Activated B cell treated with CpG ODN at 0.5 μM for 24 hours (primary cell): ENCODE measurements at regions of chr3 and their contacts with region 1.

Region 1: DNA sequence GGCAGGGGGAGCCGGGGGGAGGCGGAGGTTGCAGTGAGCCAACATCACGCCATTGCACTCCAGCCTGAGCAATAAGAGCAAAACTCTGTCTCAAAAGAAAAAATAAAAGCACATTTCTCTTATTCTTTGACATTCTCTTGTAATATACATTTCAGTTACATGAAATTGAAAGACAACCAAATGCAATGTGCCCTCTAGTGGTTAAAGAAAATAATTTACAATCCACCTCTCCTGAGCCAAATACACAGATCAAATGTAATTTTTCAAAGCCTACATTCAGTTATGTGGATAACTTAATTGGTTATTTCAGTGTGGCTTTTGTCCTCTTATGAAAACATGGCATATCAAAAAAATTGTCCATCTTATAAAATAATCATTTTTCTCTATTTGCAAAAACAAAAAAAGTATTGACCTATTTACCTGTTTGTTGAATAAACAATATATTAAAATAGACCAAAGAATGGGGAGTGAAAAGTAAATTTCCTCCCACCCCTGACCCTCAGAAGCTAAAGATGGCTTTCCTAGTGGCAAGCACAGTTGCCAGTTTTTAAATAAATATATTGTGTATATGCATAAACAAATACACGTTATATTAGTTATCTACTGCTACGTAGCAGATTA is 14.2 kb upstream of the U2SURP start:
- DNase-seq: no peak
- ATAC-seq: peak; percentile 25
- H3K4me3 Mint-ChIP-seq: no peak overlapping the region
- H3K27ac Mint-ChIP-seq: no peak overlapping the region
- H3K4me1 Mint-ChIP-seq: no peaks in the 10 kb centered on the region
- H3K27me3 Mint-ChIP-seq: no peaks in the 10 kb centered on the region
- CTCF ChIP-seq: peak; percentile 19

Region 2: DNA sequence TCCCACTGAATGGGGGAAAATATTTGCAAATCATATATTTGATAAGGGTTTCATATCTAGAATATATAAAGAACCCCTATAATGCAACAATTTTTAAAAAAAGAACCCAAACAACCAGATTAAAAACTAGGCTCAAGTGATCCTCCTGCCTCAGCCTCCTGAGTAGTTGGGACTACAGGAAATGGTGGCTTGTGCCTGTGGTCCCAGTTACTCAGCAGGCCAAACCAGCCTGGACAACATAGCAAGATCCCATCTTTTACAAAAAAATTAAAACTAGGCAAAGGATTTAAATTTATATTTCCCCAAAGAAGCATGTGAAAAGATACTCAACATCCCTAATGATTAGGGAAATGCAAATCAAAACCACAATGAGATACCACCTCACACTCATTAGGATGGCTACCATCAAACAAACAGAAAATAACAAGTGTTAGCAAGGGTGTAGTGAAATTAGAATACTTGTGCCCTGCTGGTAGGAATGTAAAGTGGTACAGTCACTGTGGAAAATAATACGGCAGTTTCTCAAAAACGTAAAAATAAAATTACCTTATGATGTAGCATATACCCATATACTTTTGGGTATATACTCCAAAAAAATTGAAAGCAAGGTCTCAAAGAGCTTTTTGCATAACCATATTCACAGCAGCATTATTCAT is 857.5 kb before region 1 on chr3:
- CTCF ChIA-PET with region 1: no interaction called
- POLR2A ChIA-PET with region 1: no interaction called
- intact Hi-C with region 1: loop called (anchors 2 kb)
- DNase-seq: no peak
- ATAC-seq: no peak
- H3K4me3 Mint-ChIP-seq: no peak overlapping the region
- H3K27ac Mint-ChIP-seq: no peak overlapping the region
- H3K4me1 Mint-ChIP-seq: peaks cover 2% of the 10 kb centered on the region
- H3K27me3 Mint-ChIP-seq: no peaks in the 10 kb centered on the region
- CTCF ChIP-seq: no peak

Region 3: GRCh38 chr3:142723968-142724681 is 263.1 kb before region 1 on chr3 and contains the start of gene TRPC1:
- CTCF ChIA-PET with region 1: no interaction called
- POLR2A ChIA-PET with region 1: no interaction called
- intact Hi-C with region 1: loop called (anchors 5 kb)
- DNase-seq: peak; percentile 54
- ATAC-seq: peak; percentile 95
- H3K4me3 Mint-ChIP-seq: peak within 1 kb of the TSS; percentile 87
- H3K27ac Mint-ChIP-seq: peak within 1 kb of the TSS; percentile 76
- H3K4me1 Mint-ChIP-seq: peaks cover 5% of the 10 kb centered on the region
- H3K27me3 Mint-ChIP-seq: peaks cover 22% of the 10 kb centered on the region
- CTCF ChIP-seq: no peak
- total RNA-seq, gene TRPC1: 1.2 and 1.3 TPM in 2 replicates

Region 4: DNA sequence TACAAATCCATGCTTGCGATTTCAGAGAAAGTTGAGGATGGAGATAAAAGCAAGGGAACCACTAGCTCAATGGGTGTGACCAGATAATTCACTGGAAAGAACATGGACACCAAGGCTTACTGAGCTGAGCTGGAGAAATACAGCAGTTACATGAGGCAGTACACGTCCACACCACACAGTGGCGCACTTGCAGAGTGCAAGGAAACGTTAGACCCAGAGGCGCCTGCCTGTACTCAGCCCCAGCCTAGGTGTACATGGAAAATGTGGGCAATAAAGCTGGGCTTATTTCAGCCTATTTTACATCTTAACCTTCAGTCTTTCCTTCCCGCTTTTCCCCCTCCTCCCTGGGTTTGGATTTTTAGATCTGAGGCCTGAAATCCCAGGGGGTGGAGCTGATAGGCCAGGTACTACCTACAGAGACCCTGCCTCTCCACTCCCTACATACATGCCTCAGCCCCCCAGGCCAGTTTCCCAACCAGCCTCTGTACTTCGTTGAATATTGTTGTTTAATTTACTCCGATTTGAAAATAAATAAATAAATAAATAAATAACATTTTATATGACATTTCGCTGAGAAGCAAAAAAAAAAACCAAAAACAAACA is 158.4 kb before region 1 on chr3:
- CTCF ChIA-PET with region 1: interaction called, 3 read pairs
- POLR2A ChIA-PET with region 1: no interaction called
- intact Hi-C with region 1: loop called (anchors 1 kb)
- DNase-seq: no peak
- ATAC-seq: peak; percentile 75
- H3K4me3 Mint-ChIP-seq: no peak overlapping the region
- H3K27ac Mint-ChIP-seq: no peak overlapping the region
- H3K4me1 Mint-ChIP-seq: no peaks in the 10 kb centered on the region
- H3K27me3 Mint-ChIP-seq: peaks cover 12% of the 10 kb centered on the region
- CTCF ChIP-seq: no peak